ENCODE measurements at regions of chrX and their contacts with region 1.

Region 1: GRCh38 chrX:143306991-143307937 is 210.0 kb downstream of the SPANXN3 start:
- DNase-seq: no peak

Region 2: DNA sequence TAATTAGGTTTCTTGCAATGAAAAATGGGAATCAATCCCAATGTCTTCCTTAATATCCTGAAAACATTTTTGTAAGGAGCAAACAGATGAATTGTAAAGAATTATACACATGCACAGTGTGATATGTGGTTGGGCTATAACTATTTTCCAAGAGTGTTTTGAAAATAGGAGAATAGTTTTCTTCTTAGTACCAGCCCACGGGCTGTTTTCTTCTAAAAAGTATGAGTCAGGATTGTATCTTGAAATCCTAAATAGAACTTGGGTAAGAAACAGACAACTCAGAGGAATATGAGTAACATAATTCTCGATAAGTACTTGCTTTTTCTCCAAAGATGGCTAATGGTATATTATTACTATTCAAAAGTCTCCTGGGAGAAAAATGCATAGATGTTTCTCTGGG is 1238.9 kb before region 1 on chrX:
- intact Hi-C with region 1: loop called in 1 of 2 experiments (anchors 5 kb)
- DNase-seq: no peak

Region 3: DNA sequence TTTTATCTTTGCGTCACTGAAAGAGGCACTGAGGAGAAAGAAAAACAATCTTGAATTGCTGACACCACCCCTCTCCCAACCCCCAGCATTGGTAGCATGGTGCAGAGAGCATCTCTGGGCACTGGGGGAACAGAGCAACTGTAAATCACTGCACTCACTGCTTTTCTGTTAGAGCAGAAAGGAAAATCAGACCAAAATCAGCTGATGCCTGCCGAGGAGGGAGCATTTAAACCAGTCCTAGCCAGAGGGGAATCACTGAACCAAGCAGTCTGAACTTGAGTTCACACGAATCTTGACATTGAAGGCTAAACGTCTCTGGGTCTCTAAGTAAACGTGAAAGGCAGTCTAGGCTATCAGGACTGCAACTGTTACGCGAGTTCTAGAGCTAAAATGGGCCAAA is 75.8 kb before region 1 on chrX:
- intact Hi-C with region 1: no loop called
- DNase-seq: no peak

Measured in posterior vena cava (tissue), 2 donors.